ENCODE measurements at regions of chr3 and their contacts with region 1.

Region 1: GRCh38 chr3:48400824-48401433 is 28.9 kb downstream of the FBXW12 start:
- DNase-seq: peak; percentile 50
- ATAC-seq: peak; percentile 63
- H3K4me3 Mint-ChIP-seq: no peak overlapping the region
- H3K27ac Mint-ChIP-seq: peak overlapping the region; percentile 88
- H3K4me1 Mint-ChIP-seq: peaks cover 11% of the 10 kb centered on the region
- H3K27me3 Mint-ChIP-seq: peaks cover 2% of the 10 kb centered on the region
- CTCF ChIP-seq: peak; percentile 68

Region 2: GRCh38 chr3:48194446-48195071 is 206.4 kb before region 1 on chr3:
- CTCF ChIA-PET with region 1: interaction called, 29 read pairs
- POLR2A ChIA-PET with region 1: interaction called, 3 read pairs
- DNase-seq: peak; percentile 86
- ATAC-seq: peak; percentile 67
- H3K4me3 Mint-ChIP-seq: no peak overlapping the region
- H3K27ac Mint-ChIP-seq: no peak overlapping the region
- H3K4me1 Mint-ChIP-seq: peaks cover 34% of the 10 kb centered on the region
- H3K27me3 Mint-ChIP-seq: no peaks in the 10 kb centered on the region; the same call in 1 of the 2 replicates
- CTCF ChIP-seq: peak; percentile 76

Region 3: GRCh38 chr3:48372377-48372770 is 28.6 kb before region 1 on chr3:
- CTCF ChIA-PET with region 1: interaction called, 12 read pairs
- POLR2A ChIA-PET with region 1: no interaction called
- DNase-seq: no peak
- ATAC-seq: no peak
- H3K4me3 Mint-ChIP-seq: no peak overlapping the region
- H3K27ac Mint-ChIP-seq: no peak overlapping the region
- H3K4me1 Mint-ChIP-seq: peaks cover 16% of the 10 kb centered on the region
- H3K27me3 Mint-ChIP-seq: no peaks in the 10 kb centered on the region; the same call in 1 of the 2 replicates
- CTCF ChIP-seq: no peak

Region 4: DNA sequence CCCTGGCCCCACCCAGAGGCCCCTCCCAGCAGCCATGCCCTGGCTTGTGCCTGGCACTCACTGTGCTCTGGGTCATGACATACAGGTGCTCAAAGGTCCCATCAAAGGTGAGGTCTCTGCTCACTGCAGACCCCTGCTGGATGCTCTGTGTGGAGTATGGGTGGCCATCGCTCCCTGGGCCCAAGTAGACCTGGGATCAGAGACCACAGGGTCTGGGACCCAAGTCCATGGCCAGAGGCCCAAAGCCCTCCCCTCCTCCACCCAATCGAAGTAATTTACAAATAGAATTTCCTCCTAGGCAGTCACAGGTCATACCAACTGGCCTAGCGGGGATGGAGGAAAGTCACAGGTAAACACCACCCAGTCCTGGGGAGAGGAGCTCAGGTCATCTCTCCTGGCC is 21.3 kb after region 1 on chr3:
- CTCF ChIA-PET with region 1: interaction called, 142 read pairs
- POLR2A ChIA-PET with region 1: no interaction called
- DNase-seq: no peak
- ATAC-seq: peak; percentile 50
- H3K4me3 Mint-ChIP-seq: no peak overlapping the region
- H3K27ac Mint-ChIP-seq: no peak overlapping the region
- H3K4me1 Mint-ChIP-seq: peaks cover 19% of the 10 kb centered on the region
- H3K27me3 Mint-ChIP-seq: no peaks in the 10 kb centered on the region
- CTCF ChIP-seq: no peak

Region 5: GRCh38 chr3:48446425-48447193 is 45.7 kb after region 1 on chr3 and contains the start of gene ATRIP:
- CTCF ChIA-PET with region 1: interaction called, 19 read pairs
- POLR2A ChIA-PET with region 1: interaction called, 3 read pairs
- DNase-seq: peak; percentile 93
- ATAC-seq: peak; percentile 92
- H3K4me3 Mint-ChIP-seq: peak within 1 kb of the TSS; percentile 94
- H3K27ac Mint-ChIP-seq: peak within 1 kb of the TSS; percentile 89
- H3K4me1 Mint-ChIP-seq: peaks cover 26% of the 10 kb centered on the region
- H3K27me3 Mint-ChIP-seq: no peaks in the 10 kb centered on the region
- CTCF ChIP-seq: no peak
- total RNA-seq, gene ATRIP: 15.5 to 18.2 TPM (median 15.6 TPM) in 3 replicates

Region 6: GRCh38 chr3:48507351-48508061 is 106.6 kb after region 1 on chr3:
- CTCF ChIA-PET with region 1: interaction called, 14 read pairs
- POLR2A ChIA-PET with region 1: no interaction called
- DNase-seq: peak; percentile 84
- ATAC-seq: peak; percentile 85
- H3K4me3 Mint-ChIP-seq: no peak overlapping the region
- H3K27ac Mint-ChIP-seq: peak overlapping the region; percentile 90
- H3K4me1 Mint-ChIP-seq: peaks cover 36% of the 10 kb centered on the region
- H3K27me3 Mint-ChIP-seq: no peaks in the 10 kb centered on the region; the same call in none of the 2 replicates
- CTCF ChIP-seq: 0 out of 2 replicates have a peak, but pooled peaks have one; percentile 17

Region 7: GRCh38 chr3:48556793-48557626 is 156.1 kb after region 1 on chr3 and contains the start of gene PFKFB4:
- CTCF ChIA-PET with region 1: interaction called, 16 read pairs
- POLR2A ChIA-PET with region 1: no interaction called
- DNase-seq: peak; percentile 99
- ATAC-seq: peak; percentile 82
- H3K4me3 Mint-ChIP-seq: peak within 1 kb of the TSS; percentile 86
- H3K27ac Mint-ChIP-seq: peak within 1 kb of the TSS; percentile 95
- H3K4me1 Mint-ChIP-seq: peaks cover 67% of the 10 kb centered on the region
- H3K27me3 Mint-ChIP-seq: no peaks in the 10 kb centered on the region
- CTCF ChIP-seq: no peak
- total RNA-seq, gene PFKFB4: 18.0 to 26.8 TPM (median 26.7 TPM) in 3 replicates

Region 8: GRCh38 chr3:48644898-48645760 is 244.2 kb after region 1 on chr3:
- CTCF ChIA-PET with region 1: no interaction called
- POLR2A ChIA-PET with region 1: no interaction called
- DNase-seq: no peak
- ATAC-seq: no peak
- H3K4me3 Mint-ChIP-seq: no peak overlapping the region
- H3K27ac Mint-ChIP-seq: no peak overlapping the region
- H3K4me1 Mint-ChIP-seq: no peaks in the 10 kb centered on the region
- H3K27me3 Mint-ChIP-seq: no peaks in the 10 kb centered on the region
- CTCF ChIP-seq: no peak